Dorsolateral prefrontal cortex (tissue), 120 donors: ENCODE measurements at regions of chr7 and their contacts with region 1.

Region 1: GRCh38 chr7:20786779-20787659 is at the start of gene SP8:
- DNase-seq: peak in 1 of 10 donors; percentile 53
- H3K4me3 ChIP-seq: peak within 1 kb of the TSS in 57 of 59 donors; percentile 14 to 64 (median 42)
- H3K27ac ChIP-seq: no peak within 1 kb of the TSS
- H3K27me3 ChIP-seq: peaks cover 21 to 100% (median 99%) of the 10 kb centered on the region in 45 donors
- CTCF ChIP-seq: no peak
- total RNA-seq, gene SP8: 0.21 to 3.7 (median 1.2) TPM

Region 2: GRCh38 chr7:21507626-21508343 is 720.8 kb after region 1 on chr7:
- intact Hi-C with region 1: loop called in 1 of 2 experiments (anchors 10 kb)
- DNase-seq: peak in 3 of 10 donors; percentile 11 to 53 (median 51)
- H3K4me3 ChIP-seq: no peak overlapping the region
- H3K27ac ChIP-seq: no peak overlapping the region
- H3K27me3 ChIP-seq: no peaks in the 10 kb centered on the region
- CTCF ChIP-seq: peak; percentile 49 to 83 (median 70)

Region 3: GRCh38 chr7:21550826-21551544 is 764.0 kb after region 1 on chr7:
- intact Hi-C with region 1: no loop called
- DNase-seq: no peak
- H3K4me3 ChIP-seq: no peak overlapping the region
- H3K27ac ChIP-seq: no peak overlapping the region
- H3K27me3 ChIP-seq: peaks cover 0 to 16% (median 0%) of the 10 kb centered on the region in 45 donors
- CTCF ChIP-seq: no peak